ENCODE measurements at regions of chr4 and their contacts with region 1.

Region 1: DNA sequence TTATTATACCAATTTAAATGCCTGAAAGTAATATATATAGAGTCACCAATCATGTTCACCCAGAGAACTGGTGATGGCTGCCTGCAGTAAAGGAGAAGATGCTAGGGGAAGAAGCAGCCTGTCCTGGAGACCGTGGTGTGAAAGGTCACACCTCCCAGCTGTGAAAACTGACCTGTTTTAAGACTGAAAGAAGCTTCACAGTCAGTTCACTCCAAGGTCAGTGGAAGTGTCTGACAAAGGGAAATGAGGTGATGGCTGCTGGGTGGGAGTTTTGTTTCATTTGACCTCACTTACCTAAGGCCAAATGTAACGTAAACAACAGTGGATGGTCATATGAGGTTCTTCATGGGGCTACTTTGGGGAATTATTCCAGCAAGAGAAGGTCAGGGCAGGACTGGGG is 352.1 kb upstream of the GATB start:
- DNase-seq: no peak
- ATAC-seq: no peak
- H3K4me3 ChIP-seq: no peak overlapping the region
- H3K27ac ChIP-seq: no peak overlapping the region
- H3K4me1 ChIP-seq: peaks cover 15 to 37% of the 10 kb centered on the region in 2 donors
- H3K27me3 ChIP-seq: no peaks in the 10 kb centered on the region
- CTCF ChIP-seq: no peak
- POLR2A ChIP-seq: no peak

Region 2: DNA sequence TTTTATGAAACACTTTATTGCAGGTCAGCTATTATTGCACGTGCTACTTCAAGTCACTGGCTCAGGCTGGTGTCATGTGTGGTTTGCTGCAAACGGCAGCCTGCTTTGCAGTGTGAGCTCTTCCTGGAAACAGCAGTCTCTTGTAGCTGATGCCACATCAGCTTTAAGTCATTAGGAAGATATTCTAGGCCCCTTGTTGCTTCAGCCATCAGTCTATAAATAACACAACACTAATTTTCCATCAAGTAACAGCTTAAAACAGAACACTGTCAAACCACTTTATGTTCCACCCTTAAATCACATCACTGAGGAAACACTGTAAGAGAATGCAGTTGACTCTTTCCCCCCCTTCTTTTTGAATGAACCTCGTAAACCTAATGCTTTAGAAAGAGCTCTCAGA is 445.8 kb before region 1 on chr4:
- in situ Hi-C with region 1: no loop called
- intact Hi-C with region 1: loop called (anchors 10 kb)
- DNase-seq: peak; percentile 64 to 70
- ATAC-seq: peak; percentile 77 to 78
- H3K4me3 ChIP-seq: no peak overlapping the region
- H3K27ac ChIP-seq: peak overlapping the region; percentile 69 to 95 (median 83)
- H3K4me1 ChIP-seq: peaks cover 56% of the 10 kb centered on the region in 2 donors
- H3K27me3 ChIP-seq: no peaks in the 10 kb centered on the region
- CTCF ChIP-seq: peak in 1 of 5 experiments; percentile 26
- POLR2A ChIP-seq: peak; percentile 16 to 83

Region 3: GRCh38 chr4:152063885-152064240 is 49.0 kb before region 1 on chr4:
- in situ Hi-C with region 1: no loop called
- intact Hi-C with region 1: no loop called
- DNase-seq: peak; percentile 37 to 47
- ATAC-seq: peak; percentile 91 to 92
- H3K4me3 ChIP-seq: peak overlapping the region in 1 of 4 donors; percentile 13
- H3K27ac ChIP-seq: peak overlapping the region in 3 of 4 donors; percentile 44 to 65 (median 50)
- H3K4me1 ChIP-seq: peaks cover 11 to 20% of the 10 kb centered on the region in 2 donors
- H3K27me3 ChIP-seq: no peaks in the 10 kb centered on the region
- CTCF ChIP-seq: peak in 2 of 5 experiments; percentile 18 to 39
- POLR2A ChIP-seq: no peak

Region 4: GRCh38 chr4:152148057-152148456 is 35.2 kb after region 1 on chr4:
- in situ Hi-C with region 1: no loop called
- intact Hi-C with region 1: no loop called
- DNase-seq: no peak
- ATAC-seq: no peak
- H3K4me3 ChIP-seq: no peak overlapping the region
- H3K27ac ChIP-seq: no peak overlapping the region
- H3K4me1 ChIP-seq: no peaks in the 10 kb centered on the region
- H3K27me3 ChIP-seq: no peaks in the 10 kb centered on the region
- CTCF ChIP-seq: no peak
- POLR2A ChIP-seq: no peak

Region 5: DNA sequence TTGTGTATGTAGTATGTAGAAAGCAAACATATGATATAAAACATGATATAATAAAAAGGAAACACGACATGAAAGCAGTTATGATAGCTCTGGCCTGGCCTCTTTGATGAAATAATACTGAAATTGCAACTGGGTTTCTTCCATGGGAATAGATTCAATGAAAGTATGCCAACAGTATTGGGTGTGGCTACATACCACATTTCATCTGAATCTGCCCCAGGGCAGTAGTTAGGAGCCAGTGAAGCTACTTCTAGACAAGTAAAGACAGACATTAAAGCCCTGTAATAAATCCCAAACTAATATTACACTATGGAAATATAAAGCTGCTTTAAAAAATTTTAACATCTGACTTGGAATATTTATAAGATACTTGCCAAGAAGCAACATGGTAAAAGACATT is 215.7 kb after region 1 on chr4:
- in situ Hi-C with region 1: no loop called
- intact Hi-C with region 1: no loop called
- DNase-seq: no peak
- ATAC-seq: no peak
- H3K4me3 ChIP-seq: no peak overlapping the region
- H3K27ac ChIP-seq: no peak overlapping the region
- H3K4me1 ChIP-seq: no peaks in the 10 kb centered on the region
- H3K27me3 ChIP-seq: no peaks in the 10 kb centered on the region
- CTCF ChIP-seq: no peak
- POLR2A ChIP-seq: no peak

Measured in gastrocnemius medialis (tissue), 4 donors.